B cell (primary cell): ENCODE measurements at regions of chr15 and their contacts with region 1.

Region 1: DNA sequence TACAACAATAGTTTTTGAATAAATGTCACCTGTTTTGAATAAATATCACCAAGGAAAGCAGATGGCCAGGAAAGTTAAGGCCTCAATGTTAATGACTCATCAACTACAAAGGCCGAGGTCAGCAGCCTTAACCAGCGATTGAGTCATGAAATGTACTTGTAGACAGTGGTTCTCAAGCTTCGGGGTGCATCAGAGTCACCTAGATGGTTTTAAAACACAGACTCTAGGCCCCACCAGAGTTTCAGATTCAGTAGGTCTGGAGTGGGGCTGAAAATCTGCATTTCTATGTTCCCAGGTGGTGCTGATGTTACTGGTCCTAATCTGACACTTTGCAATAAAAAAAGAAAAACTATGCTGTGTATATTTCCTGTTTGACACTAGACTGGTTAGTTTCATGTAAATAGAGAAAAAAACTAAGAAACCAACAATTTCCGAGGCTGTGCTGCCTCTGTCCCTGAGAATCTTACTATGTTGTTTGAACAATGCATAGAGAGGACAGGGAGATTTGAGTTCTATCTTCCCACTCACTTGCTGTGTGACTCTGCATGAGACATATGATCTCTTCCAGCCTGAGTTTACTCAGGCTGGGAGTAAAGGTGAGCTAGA is 9.8 kb downstream of the RAB27A start:
- DNase-seq: peak; percentile 23
- ATAC-seq: peak; percentile 50
- H3K4me3 ChIP-seq: no peak overlapping the region
- H3K4me3 Mint-ChIP-seq: peak overlapping the region; percentile 44
- H3K27ac ChIP-seq: peak overlapping the region in 1 of 2 donors; percentile 74
- H3K27ac Mint-ChIP-seq: peak overlapping the region; percentile 85
- H3K4me1 ChIP-seq: peaks cover 39 to 46% of the 10 kb centered on the region in 2 donors
- H3K4me1 Mint-ChIP-seq: peaks cover 74% of the 10 kb centered on the region
- H3K27me3 ChIP-seq: no peaks in the 10 kb centered on the region
- H3K27me3 Mint-ChIP-seq: no peaks in the 10 kb centered on the region
- CTCF ChIP-seq: no peak

Region 2: DNA sequence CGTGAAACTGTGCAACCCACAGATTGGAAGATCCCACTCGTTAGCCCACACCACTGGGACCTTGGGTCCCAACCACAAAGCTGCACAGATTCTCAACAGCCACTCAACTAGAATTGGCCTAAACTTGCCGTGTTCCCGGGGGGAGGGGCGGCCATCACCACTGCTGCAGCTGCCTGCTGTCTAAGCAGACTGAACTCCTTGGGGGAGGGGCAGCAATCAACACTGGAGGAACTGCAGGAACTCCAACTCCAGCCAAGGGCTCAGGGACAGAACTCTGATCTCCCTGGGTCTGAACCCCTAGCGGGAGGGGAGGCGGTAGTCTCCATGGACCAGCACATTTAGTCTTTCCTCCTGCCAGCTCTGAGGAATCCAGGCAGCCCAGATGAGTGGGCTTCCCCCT is 289.1 kb before region 1 on chr15:
- CTCF ChIA-PET with region 1: no interaction called
- POLR2A ChIA-PET with region 1: no interaction called
- intact Hi-C with region 1: no loop called
- DNase-seq: no peak
- ATAC-seq: no peak
- H3K4me3 ChIP-seq: no peak overlapping the region
- H3K4me3 Mint-ChIP-seq: no peak overlapping the region
- H3K27ac ChIP-seq: no peak overlapping the region
- H3K27ac Mint-ChIP-seq: no peak overlapping the region
- H3K4me1 ChIP-seq: no peaks in the 10 kb centered on the region
- H3K4me1 Mint-ChIP-seq: no peaks in the 10 kb centered on the region
- H3K27me3 ChIP-seq: no peaks in the 10 kb centered on the region
- H3K27me3 Mint-ChIP-seq: peaks cover 5% of the 10 kb centered on the region
- CTCF ChIP-seq: no peak

Region 3: DNA sequence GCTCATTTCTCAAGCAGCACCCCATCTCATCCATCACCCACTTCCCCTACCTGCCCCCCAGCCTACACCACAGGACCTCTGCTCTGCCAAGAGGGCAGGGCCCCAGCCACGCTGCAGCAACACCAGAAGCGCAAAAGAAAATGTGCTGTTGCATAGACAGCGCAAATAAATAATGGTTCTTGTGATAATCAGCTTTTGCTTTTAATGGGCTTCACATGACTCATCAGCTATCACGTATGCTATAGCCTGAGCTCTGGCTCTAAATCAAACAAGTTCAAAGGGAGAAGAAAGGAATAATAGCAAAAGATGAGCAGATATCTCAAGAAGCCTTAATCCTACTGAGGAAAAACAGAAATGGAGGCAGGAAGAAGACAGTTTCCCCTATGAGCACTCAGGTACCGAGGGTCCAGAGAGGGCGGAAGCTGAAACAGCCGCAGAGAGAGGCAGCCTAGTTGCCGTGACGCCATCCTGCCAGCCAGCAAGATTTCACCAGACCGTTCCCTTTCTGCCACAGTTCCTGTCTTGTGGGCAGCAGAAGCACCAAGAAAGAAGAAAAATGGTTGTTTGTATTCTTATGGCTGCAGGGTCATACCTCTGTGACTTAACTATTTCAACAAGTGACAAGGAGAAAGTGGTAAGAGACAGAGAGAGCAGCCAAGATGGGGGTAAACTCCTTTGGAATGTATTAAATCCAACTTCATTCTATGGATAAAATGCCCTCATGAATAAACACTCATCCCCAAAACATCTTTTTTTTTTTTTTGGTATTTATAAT is 12.3 kb before region 1 on chr15:
- CTCF ChIA-PET with region 1: interaction called, 4 read pairs
- POLR2A ChIA-PET with region 1: no interaction called
- intact Hi-C with region 1: loop called (anchors 1 kb)
- DNase-seq: peak; percentile 80
- ATAC-seq: peak; percentile 97
- H3K4me3 ChIP-seq: peak overlapping the region; percentile 7 to 70 (median 46)
- H3K4me3 Mint-ChIP-seq: peak overlapping the region; percentile 75
- H3K27ac ChIP-seq: peak overlapping the region; percentile 73 to 90
- H3K27ac Mint-ChIP-seq: peak overlapping the region; percentile 89
- H3K4me1 ChIP-seq: peaks cover 21% of the 10 kb centered on the region in 2 donors
- H3K4me1 Mint-ChIP-seq: peaks cover 29% of the 10 kb centered on the region
- H3K27me3 ChIP-seq: no peaks in the 10 kb centered on the region
- H3K27me3 Mint-ChIP-seq: no peaks in the 10 kb centered on the region
- CTCF ChIP-seq: no peak